Panc1 (cell line): ENCODE measurements at regions of chr9 and their contacts with region 1.

Region 1: GRCh38 chr9:37220971-37221370 is 100.6 kb downstream of the ZCCHC7 start:
- DNase-seq: no peak
- ATAC-seq: no peak
- H3K4me3 ChIP-seq: no peak overlapping the region
- H3K27ac ChIP-seq: no peak overlapping the region
- H3K4me1 ChIP-seq: no peaks in the 10 kb centered on the region
- H3K27me3 ChIP-seq: no peaks in the 10 kb centered on the region
- CTCF ChIP-seq: no peak

Region 2: GRCh38 chr9:37262410-37262809 is 41.4 kb after region 1 on chr9:
- CTCF ChIA-PET with region 1: no interaction called
- POLR2A ChIA-PET with region 1: no interaction called
- in situ Hi-C with region 1: no loop called
- intact Hi-C with region 1: loop called (anchors 5 kb)
- DNase-seq: no peak
- ATAC-seq: peak; percentile 71; the same call in 1 of the 2 replicates
- H3K4me3 ChIP-seq: no peak overlapping the region
- H3K27ac ChIP-seq: no peak overlapping the region
- H3K4me1 ChIP-seq: no peaks in the 10 kb centered on the region
- H3K27me3 ChIP-seq: no peaks in the 10 kb centered on the region
- CTCF ChIP-seq: peak; percentile 86